Activated CD8-positive, alpha-beta T cell treated with anti-CD3 and anti-CD28 coated beads, Interleukin-2, amount 10 ng/mL, durations not matched to agents 7 days and 5 days (primary cell): ENCODE measurements at regions of chr12 and their contacts with region 1.

Region 1: DNA sequence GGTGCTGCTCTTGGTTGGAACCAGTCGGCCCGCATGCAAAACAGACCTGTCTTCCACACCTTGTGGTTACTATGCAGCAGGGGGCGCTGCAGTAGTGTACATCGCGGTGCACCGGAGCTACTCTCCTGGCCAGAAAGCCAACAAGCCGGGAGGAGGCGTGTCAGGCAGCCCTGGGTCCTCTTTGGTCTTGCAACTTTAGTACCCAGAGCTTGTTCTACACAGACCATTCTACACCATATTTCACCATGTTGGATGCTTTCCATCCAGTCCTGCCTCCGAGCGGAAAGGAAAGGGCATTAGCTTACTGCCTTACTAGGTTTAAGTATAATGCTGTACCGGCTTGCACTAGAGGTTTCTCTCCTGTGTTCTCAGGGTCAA is 927 bp upstream of the TMTC2 start:
- DNase-seq: peak; percentile 95
- ATAC-seq: peak; percentile 70
- H3K4me3 Mint-ChIP-seq: peak overlapping the region; percentile 87
- H3K27ac Mint-ChIP-seq: peak overlapping the region; percentile 81
- H3K4me1 Mint-ChIP-seq: peaks cover 18% of the 10 kb centered on the region
- H3K27me3 Mint-ChIP-seq: peaks cover 21% of the 10 kb centered on the region

Region 2: DNA sequence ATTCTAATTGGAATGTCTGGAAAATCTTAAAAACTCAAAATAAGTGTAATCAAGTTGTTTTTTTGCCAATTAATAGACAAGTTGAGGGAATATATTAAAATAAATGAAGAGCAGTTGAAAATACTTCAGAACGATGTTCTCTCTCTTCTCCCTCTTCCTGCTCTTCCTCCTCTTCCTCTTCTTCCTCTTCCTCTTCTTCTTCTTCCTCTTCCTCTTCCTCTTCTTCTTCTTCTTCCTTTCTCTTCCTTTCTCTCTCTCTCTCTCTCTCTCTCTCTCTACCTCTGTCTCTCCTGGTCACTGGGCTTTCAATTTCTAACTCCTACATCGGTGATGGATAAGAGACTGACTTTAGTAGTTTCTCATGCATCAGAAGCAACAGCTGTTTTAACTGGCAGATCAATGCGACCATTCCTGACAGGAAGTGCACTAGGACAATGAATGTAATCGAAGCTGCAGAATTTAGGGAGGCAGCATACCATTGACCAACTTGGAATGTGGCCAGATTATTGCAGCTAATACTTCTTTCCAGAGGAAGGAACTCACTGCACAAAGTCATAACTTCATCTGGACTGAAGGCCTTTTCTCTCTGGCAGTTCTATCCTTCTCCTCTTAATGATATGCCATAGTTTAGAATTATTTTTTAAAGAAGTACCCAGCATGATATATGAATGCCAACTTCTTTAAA is 12.8 kb before region 1 on chr12:
- CTCF ChIA-PET with region 1: interaction called, 46 read pairs
- POLR2A ChIA-PET with region 1: interaction called, 3 read pairs
- DNase-seq: no peak
- ATAC-seq: no peak
- H3K4me3 Mint-ChIP-seq: no peak overlapping the region
- H3K27ac Mint-ChIP-seq: no peak overlapping the region
- H3K4me1 Mint-ChIP-seq: no peaks in the 10 kb centered on the region
- H3K27me3 Mint-ChIP-seq: peaks cover 10% of the 10 kb centered on the region

Region 3: DNA sequence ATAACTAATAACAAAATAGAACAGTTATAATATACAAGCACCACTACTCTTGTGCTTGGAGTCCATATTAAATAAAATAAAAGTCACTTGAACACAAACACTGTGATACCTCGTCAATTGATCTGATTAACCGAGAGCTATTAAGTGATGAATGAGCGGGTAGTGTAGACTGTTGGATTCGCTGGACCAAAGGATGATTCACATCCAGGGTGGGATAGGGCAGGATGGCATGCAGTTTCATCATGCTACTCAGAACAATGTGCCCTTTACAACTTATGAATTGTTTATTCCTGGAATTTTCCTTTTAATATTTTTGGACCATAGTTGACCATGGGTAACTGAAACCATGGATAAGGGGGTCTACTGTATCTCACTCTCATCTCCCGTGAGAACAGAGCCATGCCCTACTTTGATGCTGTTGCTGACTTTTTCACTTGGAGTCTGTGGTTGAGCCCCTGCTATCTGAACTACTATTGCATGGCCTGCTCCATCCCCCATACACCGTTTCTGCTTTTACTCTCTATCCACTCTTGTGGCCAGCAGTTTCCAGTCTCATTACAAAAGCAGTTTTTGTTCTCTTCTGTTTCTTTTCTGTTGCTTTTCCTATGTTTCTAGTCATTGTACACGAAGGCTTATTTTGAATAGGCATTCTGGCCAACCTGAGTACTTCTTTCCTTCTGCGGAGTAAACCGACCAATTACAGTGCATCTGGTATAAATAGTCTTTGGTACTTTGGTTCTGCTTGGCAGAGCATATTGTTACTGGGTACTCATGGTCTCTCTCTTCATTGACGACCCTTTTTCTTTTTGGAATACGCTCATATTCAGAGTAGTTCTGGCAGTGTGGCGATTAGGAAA is 13.2 kb after region 1 on chr12:
- CTCF ChIA-PET with region 1: interaction called, 11 read pairs
- POLR2A ChIA-PET with region 1: no interaction called
- DNase-seq: no peak
- ATAC-seq: no peak
- H3K4me3 Mint-ChIP-seq: no peak overlapping the region
- H3K27ac Mint-ChIP-seq: no peak overlapping the region
- H3K4me1 Mint-ChIP-seq: no peaks in the 10 kb centered on the region
- H3K27me3 Mint-ChIP-seq: no peaks in the 10 kb centered on the region

Region 4: GRCh38 chr12:82898441-82898840 is 212.7 kb after region 1 on chr12:
- CTCF ChIA-PET with region 1: interaction called, 10 read pairs
- POLR2A ChIA-PET with region 1: no interaction called
- DNase-seq: no peak
- ATAC-seq: no peak
- H3K4me3 Mint-ChIP-seq: no peak overlapping the region
- H3K27ac Mint-ChIP-seq: no peak overlapping the region
- H3K4me1 Mint-ChIP-seq: no peaks in the 10 kb centered on the region
- H3K27me3 Mint-ChIP-seq: no peaks in the 10 kb centered on the region

Region 5: GRCh38 chr12:83823431-83823963 is 1137.7 kb after region 1 on chr12:
- CTCF ChIA-PET with region 1: interaction called, 23 read pairs
- POLR2A ChIA-PET with region 1: no interaction called
- DNase-seq: peak; percentile 44
- ATAC-seq: peak; percentile 80
- H3K4me3 Mint-ChIP-seq: no peak overlapping the region
- H3K27ac Mint-ChIP-seq: no peak overlapping the region
- H3K4me1 Mint-ChIP-seq: no peaks in the 10 kb centered on the region
- H3K27me3 Mint-ChIP-seq: no peaks in the 10 kb centered on the region